HepG2 (cell line): ENCODE measurements at regions of chr6 and their contacts with region 1.

Region 1: GRCh38 chr6:54244430-54244829 is 63.8 kb upstream of the TINAG start:
- DNase-seq: peak; percentile 18
- ATAC-seq: no peak
- H3K4me3 ChIP-seq: no peak overlapping the region
- H3K27ac ChIP-seq: no peak overlapping the region
- H3K4me1 ChIP-seq: no peaks in the 10 kb centered on the region
- H3K27me3 ChIP-seq: no peaks in the 10 kb centered on the region
- CTCF ChIP-seq: peak; percentile 25; the same call in 1 of the 2 replicates
- EP300 ChIP-seq: no peak
- POLR2A ChIP-seq: no peak
- RAD21 ChIP-seq: no peak

Region 2: GRCh38 chr6:54135665-54136369 is 108.6 kb before region 1 on chr6:
- CTCF ChIA-PET with region 1: no interaction called
- POLR2A ChIA-PET with region 1: no interaction called
- in situ Hi-C with region 1: no loop called
- intact Hi-C with region 1: loop called (anchors 5 kb)
- DNase-seq: peak; percentile 74
- ATAC-seq: peak; percentile 71
- H3K4me3 ChIP-seq: peak overlapping the region in 2 of 3 experiments; percentile 14 to 19; a peak in 1 of 6 replicates
- H3K27ac ChIP-seq: peak overlapping the region; percentile 3
- H3K4me1 ChIP-seq: peaks cover 24% of the 10 kb centered on the region
- H3K27me3 ChIP-seq: no peaks in the 10 kb centered on the region
- CTCF ChIP-seq: no peak
- EP300 ChIP-seq: peak in 1 of 2 experiments; percentile 78; a peak in 2 of 4 replicates
- POLR2A ChIP-seq: no peak
- RAD21 ChIP-seq: no peak

Region 3: GRCh38 chr6:54156650-54157250 is 87.7 kb before region 1 on chr6:
- CTCF ChIA-PET with region 1: no interaction called
- POLR2A ChIA-PET with region 1: no interaction called
- in situ Hi-C with region 1: no loop called
- intact Hi-C with region 1: loop called (anchors 5 kb)
- DNase-seq: no peak
- ATAC-seq: peak; percentile 48
- H3K4me3 ChIP-seq: no peak overlapping the region
- H3K27ac ChIP-seq: no peak overlapping the region
- H3K4me1 ChIP-seq: peaks cover 10% of the 10 kb centered on the region
- H3K27me3 ChIP-seq: no peaks in the 10 kb centered on the region; a peak in 1 of 5 replicates
- CTCF ChIP-seq: no peak
- EP300 ChIP-seq: no peak
- POLR2A ChIP-seq: no peak
- RAD21 ChIP-seq: no peak